ENCODE measurements at regions of chr6 and their contacts with region 1.

Region 1: GRCh38 chr6:12637960-12638641 is 78.5 kb upstream of the PHACTR1 start:
- DNase-seq: peak; percentile 42
- H3K4me3 ChIP-seq: no peak overlapping the region; a peak in 1 of 4 replicates
- H3K27ac ChIP-seq: no peak overlapping the region
- H3K4me1 ChIP-seq: no peaks in the 10 kb centered on the region
- H3K27me3 ChIP-seq: no peaks in the 10 kb centered on the region
- CTCF ChIP-seq: peak; percentile 78
- EP300 ChIP-seq: no peak
- RAD21 ChIP-seq: peak; percentile 90

Region 2: GRCh38 chr6:11938285-11938890 is 699.7 kb before region 1 on chr6:
- CTCF ChIA-PET with region 1: no interaction called
- POLR2A ChIA-PET with region 1: no interaction called
- DNase-seq: no peak
- H3K4me3 ChIP-seq: no peak overlapping the region
- H3K27ac ChIP-seq: no peak overlapping the region
- H3K4me1 ChIP-seq: no peaks in the 10 kb centered on the region
- H3K27me3 ChIP-seq: no peaks in the 10 kb centered on the region
- CTCF ChIP-seq: no peak
- EP300 ChIP-seq: no peak
- RAD21 ChIP-seq: no peak

Region 3: GRCh38 chr6:12618296-12618695 is 19.8 kb before region 1 on chr6:
- CTCF ChIA-PET with region 1: interaction called, 39 read pairs
- POLR2A ChIA-PET with region 1: no interaction called
- DNase-seq: no peak
- H3K4me3 ChIP-seq: no peak overlapping the region
- H3K27ac ChIP-seq: no peak overlapping the region
- H3K4me1 ChIP-seq: no peaks in the 10 kb centered on the region
- H3K27me3 ChIP-seq: no peaks in the 10 kb centered on the region
- CTCF ChIP-seq: no peak
- EP300 ChIP-seq: no peak
- RAD21 ChIP-seq: no peak

Region 4: GRCh38 chr6:12648171-12648570 is 10.1 kb after region 1 on chr6:
- CTCF ChIA-PET with region 1: interaction called, 22 read pairs
- POLR2A ChIA-PET with region 1: no interaction called
- DNase-seq: no peak
- H3K4me3 ChIP-seq: no peak overlapping the region
- H3K27ac ChIP-seq: no peak overlapping the region
- H3K4me1 ChIP-seq: no peaks in the 10 kb centered on the region
- H3K27me3 ChIP-seq: no peaks in the 10 kb centered on the region
- CTCF ChIP-seq: no peak
- EP300 ChIP-seq: no peak
- RAD21 ChIP-seq: no peak

Region 5: GRCh38 chr6:12845224-12846004 is 207.3 kb after region 1 on chr6:
- CTCF ChIA-PET with region 1: interaction called, 18 read pairs
- POLR2A ChIA-PET with region 1: no interaction called
- DNase-seq: peak; percentile 37
- H3K4me3 ChIP-seq: no peak overlapping the region
- H3K27ac ChIP-seq: peak overlapping the region in 1 of 2 experiments; percentile 55; a peak in 2 of 4 replicates
- H3K4me1 ChIP-seq: peaks cover 0 to 6% of the 10 kb centered on the region in 2 experiments; a peak in 2 of 4 replicates
- H3K27me3 ChIP-seq: no peaks in the 10 kb centered on the region
- CTCF ChIP-seq: no peak
- EP300 ChIP-seq: no peak
- RAD21 ChIP-seq: no peak

Region 6: DNA sequence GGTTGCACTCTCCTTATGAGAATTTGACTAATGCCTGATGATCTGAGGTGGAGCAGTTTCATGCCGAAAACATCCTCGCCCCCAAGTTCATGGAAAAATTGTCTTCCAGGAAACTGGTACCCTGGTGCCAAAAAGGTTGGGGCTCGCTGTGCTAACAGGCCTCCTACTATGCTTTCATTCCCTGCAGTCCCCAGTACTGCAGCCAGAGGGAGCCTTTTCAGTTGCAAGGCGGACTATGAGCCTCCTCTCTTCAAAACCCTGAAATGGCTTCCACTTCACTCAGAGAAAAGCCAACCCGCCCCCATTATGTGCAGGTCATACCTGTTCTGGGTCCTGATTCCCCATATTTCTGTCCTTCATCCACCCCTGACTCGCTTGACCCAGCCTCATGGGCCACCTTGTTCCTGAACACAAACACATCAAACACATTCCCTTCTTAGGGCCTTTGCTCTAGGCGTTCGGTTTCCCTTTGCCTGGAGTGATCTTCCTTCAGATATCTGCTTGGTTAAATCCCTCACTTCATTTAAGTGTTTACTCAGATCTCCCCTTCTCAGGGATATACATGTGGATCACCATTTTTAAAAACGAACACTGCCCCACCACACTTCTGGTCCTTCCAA is 252.2 kb after region 1 on chr6:
- CTCF ChIA-PET with region 1: interaction called, 117 read pairs
- POLR2A ChIA-PET with region 1: no interaction called
- DNase-seq: no peak
- H3K4me3 ChIP-seq: no peak overlapping the region; a peak in 1 of 4 replicates
- H3K27ac ChIP-seq: no peak overlapping the region
- H3K4me1 ChIP-seq: peaks cover 0 to 12% of the 10 kb centered on the region in 2 experiments; a peak in 2 of 4 replicates
- H3K27me3 ChIP-seq: no peaks in the 10 kb centered on the region
- CTCF ChIP-seq: peak; percentile 59
- EP300 ChIP-seq: no peak
- RAD21 ChIP-seq: no peak

Region 7: DNA sequence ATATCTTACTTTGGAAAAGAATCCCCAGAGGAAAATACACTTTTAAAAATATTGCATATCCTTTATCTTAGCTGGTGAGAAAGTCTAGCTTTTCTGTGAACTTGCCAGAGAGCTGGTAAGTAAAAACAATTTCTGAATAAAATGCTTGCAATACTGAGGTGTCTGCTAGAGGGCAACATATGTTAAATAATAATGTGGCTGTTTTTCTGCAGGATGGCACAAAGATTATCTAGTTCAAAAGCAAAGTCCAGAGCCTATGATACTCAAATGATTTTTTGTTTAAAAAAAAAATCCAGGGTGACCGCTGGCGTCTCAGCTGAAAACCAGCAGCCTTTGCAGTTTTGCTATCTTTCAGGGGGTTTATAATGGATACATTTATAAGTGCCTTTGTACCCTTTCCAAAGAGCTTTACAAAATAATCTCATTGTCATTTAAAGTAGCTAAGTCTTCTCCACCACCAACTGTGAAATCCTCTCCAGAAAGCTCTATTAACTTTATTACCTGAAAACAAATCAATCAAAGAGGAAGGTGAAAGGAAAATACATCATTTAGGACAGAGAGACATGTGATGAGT is 273.4 kb after region 1 on chr6:
- CTCF ChIA-PET with region 1: interaction called, 23 read pairs
- POLR2A ChIA-PET with region 1: no interaction called
- DNase-seq: peak; percentile 46
- H3K4me3 ChIP-seq: no peak overlapping the region; a peak in 1 of 4 replicates
- H3K27ac ChIP-seq: no peak overlapping the region
- H3K4me1 ChIP-seq: no peaks in the 10 kb centered on the region
- H3K27me3 ChIP-seq: no peaks in the 10 kb centered on the region
- CTCF ChIP-seq: peak; percentile 59
- EP300 ChIP-seq: no peak
- RAD21 ChIP-seq: peak; percentile 91

Region 8: DNA sequence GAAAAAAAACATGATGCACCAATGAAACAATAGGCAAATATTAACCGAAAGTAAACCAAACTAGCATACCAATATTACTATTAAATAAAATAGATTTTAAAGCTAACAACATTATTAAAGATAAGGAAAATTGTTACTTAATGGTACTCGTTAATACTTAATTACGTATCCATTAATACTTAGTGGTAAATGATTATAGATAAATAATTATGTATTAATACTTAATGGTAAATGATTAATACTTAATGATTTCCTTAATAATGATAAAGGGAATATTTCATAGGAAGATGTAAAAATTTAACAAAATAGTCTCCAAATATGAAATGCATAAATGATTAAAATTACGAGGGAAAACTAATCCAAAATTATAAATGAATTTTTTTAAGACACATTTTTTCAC is 357.3 kb after region 1 on chr6:
- CTCF ChIA-PET with region 1: no interaction called
- POLR2A ChIA-PET with region 1: no interaction called
- DNase-seq: no peak
- H3K4me3 ChIP-seq: no peak overlapping the region
- H3K27ac ChIP-seq: no peak overlapping the region
- H3K4me1 ChIP-seq: no peaks in the 10 kb centered on the region
- H3K27me3 ChIP-seq: no peaks in the 10 kb centered on the region
- CTCF ChIP-seq: no peak
- EP300 ChIP-seq: no peak
- RAD21 ChIP-seq: no peak

Measured in SK-N-SH (cell line).